Mammary epithelial cell (primary cell): ENCODE measurements at regions of chr3 and their contacts with region 1.

Region 1: DNA sequence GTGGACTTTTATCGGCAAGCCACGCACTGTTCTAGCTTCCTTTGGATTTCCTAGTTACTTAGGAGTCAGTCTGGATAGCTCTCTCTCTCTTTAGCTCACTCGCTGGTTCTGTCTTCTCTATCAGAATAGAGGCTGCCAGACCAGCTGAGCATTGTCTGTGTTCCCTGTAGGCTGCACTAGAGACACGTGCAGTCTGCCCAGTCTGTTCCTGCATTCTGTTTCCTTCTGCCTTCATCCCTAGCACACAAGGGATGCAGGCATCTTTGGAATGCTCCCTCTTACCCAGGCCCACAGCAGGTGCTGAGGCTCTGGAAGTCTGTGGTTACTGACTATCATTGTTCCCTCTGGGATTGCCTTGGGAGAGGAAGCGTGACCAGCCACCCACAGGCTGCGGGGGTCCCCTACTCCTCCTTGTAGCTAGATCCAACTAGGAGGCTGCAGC is 322.8 kb downstream of the ZNF621 start:
- DNase-seq: peak; percentile 12
- H3K4me3 ChIP-seq: no peak overlapping the region
- H3K27ac ChIP-seq: no peak overlapping the region
- H3K4me1 ChIP-seq: peaks cover 11% of the 10 kb centered on the region
- H3K27me3 ChIP-seq: no peaks in the 10 kb centered on the region
- CTCF ChIP-seq: peak; percentile 12 to 25

Region 2: GRCh38 chr3:40719660-40720287 is 127.8 kb before region 1 on chr3:
- CTCF ChIA-PET with region 1: no interaction called
- dilution Hi-C with region 1: no loop called
- in situ Hi-C with region 1: no loop called
- intact Hi-C with region 1: no loop called
- DNase-seq: peak; percentile 55
- H3K4me3 ChIP-seq: no peak overlapping the region
- H3K27ac ChIP-seq: no peak overlapping the region
- H3K4me1 ChIP-seq: peaks cover 15% of the 10 kb centered on the region
- H3K27me3 ChIP-seq: no peaks in the 10 kb centered on the region
- CTCF ChIP-seq: peak; percentile 24 to 75

Region 3: GRCh38 chr3:40800343-40800742 is 47.2 kb before region 1 on chr3:
- CTCF ChIA-PET with region 1: no interaction called
- dilution Hi-C with region 1: loop called (anchors 5 kb)
- in situ Hi-C with region 1: no loop called
- intact Hi-C with region 1: no loop called
- DNase-seq: peak; percentile 96
- H3K4me3 ChIP-seq: peak overlapping the region in 1 of 3 experiments; percentile 22
- H3K27ac ChIP-seq: peak overlapping the region; percentile 46
- H3K4me1 ChIP-seq: peaks cover 29% of the 10 kb centered on the region
- H3K27me3 ChIP-seq: no peaks in the 10 kb centered on the region
- CTCF ChIP-seq: no peak

Region 4: DNA sequence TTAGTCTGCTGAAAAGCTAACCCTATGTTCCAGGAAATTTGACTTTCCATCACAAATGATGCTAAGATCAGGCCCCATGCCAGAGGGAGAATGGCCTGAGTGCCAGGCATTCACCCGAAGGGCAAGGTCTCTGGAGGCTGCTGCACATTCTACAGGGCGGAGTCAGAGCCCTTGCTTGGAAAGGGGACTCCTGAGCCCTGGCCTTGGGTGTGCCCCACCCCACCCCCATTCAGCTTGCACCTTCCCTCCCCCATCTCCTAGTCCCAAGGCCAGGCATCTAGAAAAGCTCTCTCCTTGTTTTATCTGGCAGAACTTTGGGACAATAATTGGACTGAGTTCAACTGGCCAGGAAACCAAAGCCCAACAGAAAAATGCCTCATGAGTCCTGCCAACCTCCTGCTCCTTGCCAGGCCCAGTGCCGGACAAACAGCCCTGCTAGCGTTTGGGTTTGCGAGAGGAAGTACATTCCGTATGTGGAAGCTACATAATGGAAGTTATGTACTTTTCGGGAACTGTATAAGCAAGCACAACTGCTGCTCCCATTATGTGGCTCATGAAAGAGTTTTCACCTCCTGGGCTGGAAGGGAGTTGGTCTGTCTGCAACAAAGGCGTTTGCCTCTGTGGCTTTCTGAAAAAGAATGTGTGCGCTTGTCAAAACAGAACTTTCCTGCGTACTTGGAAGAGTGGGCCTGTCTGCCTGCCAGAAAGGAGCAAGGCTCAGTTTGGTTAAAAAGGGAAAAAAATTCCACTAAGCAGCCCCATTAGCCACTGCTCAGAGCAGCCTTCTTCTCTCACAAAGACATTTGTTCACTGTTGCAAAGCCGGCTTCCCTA is 30.3 kb after region 1 on chr3:
- CTCF ChIA-PET with region 1: no interaction called
- dilution Hi-C with region 1: no loop called
- in situ Hi-C with region 1: no loop called
- intact Hi-C with region 1: no loop called
- DNase-seq: peak; percentile 29
- H3K4me3 ChIP-seq: no peak overlapping the region
- H3K27ac ChIP-seq: no peak overlapping the region
- H3K4me1 ChIP-seq: peaks cover 12% of the 10 kb centered on the region
- H3K27me3 ChIP-seq: no peaks in the 10 kb centered on the region
- CTCF ChIP-seq: no peak

Region 5: GRCh38 chr3:40939030-40939740 is 91.6 kb after region 1 on chr3:
- CTCF ChIA-PET with region 1: no interaction called
- dilution Hi-C with region 1: loop called (anchors 5 kb)
- in situ Hi-C with region 1: no loop called
- intact Hi-C with region 1: no loop called
- DNase-seq: peak; percentile 33
- H3K4me3 ChIP-seq: no peak overlapping the region
- H3K27ac ChIP-seq: no peak overlapping the region
- H3K4me1 ChIP-seq: peaks cover 12% of the 10 kb centered on the region
- H3K27me3 ChIP-seq: no peaks in the 10 kb centered on the region
- CTCF ChIP-seq: no peak